K562 (cell line): ENCODE measurements at regions of chr6 and their contacts with region 1.

Region 1: DNA sequence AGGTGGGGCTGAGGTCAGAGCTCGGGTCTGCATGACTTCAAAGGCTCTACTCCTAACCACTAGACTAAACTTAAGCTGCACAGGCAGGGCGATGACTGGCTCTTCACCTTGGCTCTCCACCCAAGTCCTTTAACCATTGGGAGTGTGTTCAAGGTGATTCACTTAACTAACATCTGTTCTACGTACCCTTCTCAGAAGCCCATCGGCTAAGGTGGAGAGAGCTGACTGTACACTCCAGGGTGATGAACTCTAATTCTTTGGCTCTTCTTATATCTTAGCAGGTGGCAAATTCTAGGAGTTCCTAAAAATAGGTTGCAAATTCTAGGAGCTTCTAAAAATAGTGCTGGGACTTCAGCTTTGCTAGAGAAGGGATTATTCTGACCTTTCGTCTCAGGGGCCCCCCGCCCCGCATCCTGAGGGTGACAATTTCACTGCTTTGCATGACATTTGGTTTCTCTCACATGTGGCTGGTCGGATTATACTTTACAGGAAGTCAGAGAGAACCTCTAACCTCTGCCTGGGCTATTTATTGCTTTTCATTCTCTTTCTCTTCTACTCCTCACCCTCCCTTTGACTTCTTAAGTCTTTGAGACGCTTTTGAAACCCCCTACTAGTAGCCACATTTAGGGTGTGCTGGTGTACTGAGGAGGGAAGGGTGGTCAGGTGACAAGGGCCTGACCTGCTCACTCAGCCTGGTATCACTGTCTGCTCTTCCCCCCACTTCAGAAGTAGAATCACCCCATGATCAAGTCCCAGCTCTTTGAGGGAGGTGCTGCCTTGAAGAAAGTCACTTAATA is 55.5 kb downstream of the PRDM1 start:
- DNase-seq: peak in 2 of 4 experiments; percentile 28 to 53
- ATAC-seq: peak; percentile 71
- H3K4me3 ChIP-seq: no peak overlapping the region
- H3K27ac ChIP-seq: peak overlapping the region; percentile 52; the same call in 2 of the 3 replicates
- H3K4me1 ChIP-seq: peaks cover 6 to 17% of the 10 kb centered on the region in 2 experiments; a peak in 3 of 5 replicates
- H3K27me3 ChIP-seq: no peaks in the 10 kb centered on the region
- CTCF ChIP-seq: no peak
- EP300 ChIP-seq: no peak
- POLR2A ChIP-seq: no peak
- RAD21 ChIP-seq: no peak

Region 2: DNA sequence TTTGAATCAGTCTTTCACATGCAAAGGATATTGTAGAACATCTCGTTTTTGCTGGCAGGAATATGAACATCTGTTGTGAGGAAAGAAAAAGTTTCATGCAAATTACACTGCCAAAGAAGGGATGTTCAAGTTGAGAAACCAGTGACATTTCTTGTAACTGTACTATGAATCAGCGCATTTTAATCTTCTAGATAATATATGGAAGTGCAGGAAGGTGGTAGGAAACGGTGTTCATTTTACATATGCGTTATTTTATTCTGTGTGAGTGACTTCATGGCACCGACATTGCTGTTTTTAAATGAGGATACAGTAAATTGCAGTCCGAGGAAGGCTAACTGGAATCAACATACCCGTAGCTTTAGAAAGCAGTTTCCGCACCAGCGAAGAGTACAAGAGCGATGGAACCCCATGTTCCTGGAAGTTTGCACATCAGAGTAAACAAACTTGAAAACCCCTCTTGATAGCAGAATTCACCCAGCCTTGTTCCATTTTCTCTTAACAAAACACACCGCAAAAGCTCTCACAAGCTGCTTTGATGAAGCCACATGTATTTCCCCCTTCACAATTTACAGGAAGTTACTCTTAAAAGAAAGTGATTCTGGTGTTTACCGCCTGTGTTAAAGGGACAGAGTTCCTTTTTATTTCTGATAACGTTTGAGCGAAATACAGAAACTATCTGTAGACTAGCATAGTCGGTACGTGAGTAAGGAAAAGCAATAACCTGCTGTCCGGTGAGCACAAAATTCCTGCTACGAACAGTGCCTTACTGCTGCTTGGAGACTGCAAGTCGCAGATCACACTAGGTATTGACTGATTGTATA is 44.0 kb before region 1 on chr6:
- CTCF ChIA-PET with region 1: no interaction called
- POLR2A ChIA-PET with region 1: interaction called, 3 read pairs
- in situ Hi-C with region 1: no loop called
- intact Hi-C with region 1: loop called (anchors 2 kb)
- DNase-seq: peak in 2 of 4 experiments; percentile 20 to 56
- ATAC-seq: peak; percentile 68
- H3K4me3 ChIP-seq: peak overlapping the region; percentile 31
- H3K27ac ChIP-seq: peak overlapping the region; percentile 81
- H3K4me1 ChIP-seq: peaks cover 10 to 25% of the 10 kb centered on the region in 2 experiments; a peak in 4 of 5 replicates
- H3K27me3 ChIP-seq: no peaks in the 10 kb centered on the region
- CTCF ChIP-seq: no peak
- EP300 ChIP-seq: peak; percentile 44; the same call in 1 of the 2 replicates
- POLR2A ChIP-seq: peak; percentile 54
- RAD21 ChIP-seq: no peak

Region 3: GRCh38 chr6:106223300-106223930 is 81.8 kb after region 1 on chr6:
- CTCF ChIA-PET with region 1: no interaction called
- POLR2A ChIA-PET with region 1: no interaction called
- in situ Hi-C with region 1: no loop called
- intact Hi-C with region 1: loop called (anchors 5 kb)
- DNase-seq: peak; percentile 13 to 71 (median 30)
- ATAC-seq: peak; percentile 81
- H3K4me3 ChIP-seq: no peak overlapping the region
- H3K27ac ChIP-seq: no peak overlapping the region
- H3K4me1 ChIP-seq: peaks cover 0 to 5% of the 10 kb centered on the region in 2 experiments; a peak in 1 of 5 replicates
- H3K27me3 ChIP-seq: no peaks in the 10 kb centered on the region
- CTCF ChIP-seq: peak in 2 of 3 experiments; percentile 61 to 80; a peak in 5 of 6 replicates
- EP300 ChIP-seq: no peak
- POLR2A ChIP-seq: no peak
- RAD21 ChIP-seq: peak; percentile 86 to 88